Testis (tissue), 5 donors: ENCODE measurements at regions of chr3 and their contacts with region 1.

Region 1: DNA sequence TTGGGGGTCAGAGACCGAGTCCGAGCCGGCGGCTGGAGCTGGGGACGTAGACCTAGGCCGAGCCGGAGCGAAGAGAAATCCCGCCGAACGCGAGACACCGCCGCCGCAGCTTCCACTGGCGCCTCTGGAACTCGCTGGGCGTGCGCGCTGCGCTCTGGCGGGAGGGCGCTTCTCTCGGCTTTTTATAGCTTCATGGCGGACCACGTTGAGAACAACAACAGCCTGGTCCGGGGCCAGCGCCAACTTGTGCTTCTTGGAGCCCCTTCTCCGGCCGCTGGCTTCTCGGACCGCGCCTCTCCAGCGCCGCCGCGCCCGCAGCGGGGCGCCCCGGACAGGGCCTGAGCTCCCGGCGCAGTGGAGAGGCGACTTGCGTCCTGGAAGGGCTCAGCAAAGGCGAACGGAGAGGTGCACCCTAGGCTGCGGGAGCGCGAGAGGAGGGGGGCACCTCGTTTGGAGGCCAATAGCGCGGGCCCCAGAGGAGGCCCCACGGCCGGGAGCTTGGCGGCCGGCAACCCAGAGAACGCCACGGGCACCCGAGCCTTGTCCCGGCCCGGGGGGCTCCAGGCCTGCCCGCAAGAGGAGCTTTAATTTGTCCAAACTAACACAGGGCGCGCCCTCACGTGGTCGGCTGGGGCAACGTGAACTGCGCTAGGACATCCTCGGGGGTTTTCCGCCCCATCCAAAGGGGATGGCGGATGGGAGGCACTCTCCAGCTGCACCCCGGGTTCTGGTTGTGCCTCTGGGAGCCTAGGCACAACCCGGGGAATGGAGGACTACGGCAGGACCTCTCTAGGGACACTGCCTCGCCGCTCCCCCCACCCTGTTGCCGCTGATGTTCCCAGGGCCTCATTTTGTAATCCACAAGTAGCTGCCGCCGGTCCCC is 37.7 kb downstream of the HMCES start:
- DNase-seq: peak; percentile 90
- H3K4me3 ChIP-seq: peak overlapping the region; percentile 68 to 93
- H3K27ac ChIP-seq: peak overlapping the region; percentile 86 to 89
- H3K4me1 ChIP-seq: peaks cover 21% of the 10 kb centered on the region
- H3K27me3 ChIP-seq: no peaks in the 10 kb centered on the region
- CTCF ChIP-seq: peak in 2 of 3 experiments; percentile 42 to 58
- POLR2A ChIP-seq: peak; percentile 81

Region 2: GRCh38 chr3:129278439-129278970 is 37.9 kb before region 1 on chr3 and contains the start of gene HMCES:
- intact Hi-C with region 1: loop called (anchors 5 kb)
- DNase-seq: peak; percentile 94
- H3K4me3 ChIP-seq: peak within 1 kb of the TSS; percentile 95 to 98
- H3K27ac ChIP-seq: peak within 1 kb of the TSS; percentile 97
- H3K4me1 ChIP-seq: peaks cover 6% of the 10 kb centered on the region
- H3K27me3 ChIP-seq: no peaks in the 10 kb centered on the region
- CTCF ChIP-seq: no peak
- POLR2A ChIP-seq: peak; percentile 27
- total RNA-seq, gene HMCES: 37.8 to 41.6 TPM